ENCODE measurements at regions of chr6 and their contacts with region 1.

Region 1: GRCh38 chr6:31497531-31498476 is at the start of gene MICB:
- DNase-seq: no peak
- H3K4me3 ChIP-seq: peak within 1 kb of the TSS; percentile 54 to 80 (median 58)
- H3K27ac ChIP-seq: peak within 1 kb of the TSS; percentile 53 to 83 (median 70)
- H3K4me1 ChIP-seq: peaks cover 4 to 64% (median 12%) of the 10 kb centered on the region in 3 donors
- H3K27me3 ChIP-seq: peaks cover 0 to 52% (median 0%) of the 10 kb centered on the region in 4 donors
- CTCF ChIP-seq: peak in 2 of 6 experiments; percentile 13 to 19
- POLR2A ChIP-seq: peak in 2 of 4 donors; percentile 44 to 57
- total RNA-seq, gene MICB: 0.23 to 2.6 (median 2.1) TPM

Region 2: GRCh38 chr6:31546962-31547726 is 49.3 kb after region 1 on chr6 and contains the start of gene NFKBIL1:
- intact Hi-C with region 1: loop called (anchors 5 kb)
- DNase-seq: peak; percentile 77
- H3K4me3 ChIP-seq: peak within 1 kb of the TSS; percentile 34 to 67 (median 46)
- H3K27ac ChIP-seq: peak within 1 kb of the TSS; percentile 86 to 91 (median 88)
- H3K4me1 ChIP-seq: peaks cover 12 to 54% (median 17%) of the 10 kb centered on the region in 3 donors
- H3K27me3 ChIP-seq: no peaks in the 10 kb centered on the region
- CTCF ChIP-seq: peak in 1 of 6 experiments; percentile 27
- POLR2A ChIP-seq: peak in 2 of 4 donors; percentile 23 to 46
- total RNA-seq, gene NFKBIL1: 7.8 to 25.2 (median 16.7) TPM

Measured in esophagus squamous epithelium (tissue), 5 donors.